ENCODE measurements at regions of chr16 and their contacts with region 1.

Region 1: DNA sequence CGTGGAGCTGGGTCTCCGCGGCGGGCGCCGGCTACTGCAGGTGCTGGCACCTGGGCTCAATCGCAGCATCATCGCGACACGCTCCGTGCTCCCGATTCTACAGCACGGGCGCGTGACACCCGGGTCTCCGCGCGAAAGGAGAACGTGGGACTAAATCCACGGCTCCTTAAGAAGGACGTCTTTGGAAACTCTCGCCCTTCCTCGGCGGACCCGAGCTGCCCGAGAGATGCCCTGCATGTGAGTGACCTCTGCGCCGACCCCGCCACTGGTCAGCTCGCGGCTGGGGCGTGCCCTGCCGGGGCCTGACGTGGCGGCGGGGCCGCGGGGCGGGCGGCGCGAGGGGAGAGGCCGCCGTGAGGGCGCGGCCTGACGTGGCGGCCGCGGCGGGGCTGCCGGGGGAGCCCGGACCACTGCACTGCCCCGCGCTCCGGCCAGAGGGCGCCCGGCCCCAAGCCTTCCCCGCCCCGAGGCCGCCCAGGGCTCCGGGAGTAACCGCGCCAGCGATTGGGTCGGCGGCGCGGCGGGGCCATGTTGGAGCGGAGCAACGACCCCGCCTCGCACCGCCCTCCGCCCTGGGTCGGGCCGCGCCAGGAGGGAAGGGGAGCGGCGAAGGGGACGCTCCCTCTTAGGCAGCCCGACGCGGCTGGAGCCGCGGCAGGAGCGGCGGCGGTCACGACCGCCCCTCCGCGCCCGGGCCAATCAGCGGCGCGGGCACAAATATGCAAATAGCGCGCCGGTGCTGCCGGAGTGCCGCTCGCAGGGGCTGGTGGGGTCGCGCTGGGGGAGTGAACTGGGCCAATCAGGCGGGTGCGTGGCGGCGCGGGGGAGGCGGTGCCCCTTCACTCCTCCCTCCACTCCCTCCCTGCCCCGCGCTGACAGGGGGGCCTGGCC is 75.6 kb downstream of the CHD9 start:
- DNase-seq: peak; percentile 97
- ATAC-seq: peak; percentile 94 to 95

Region 2: DNA sequence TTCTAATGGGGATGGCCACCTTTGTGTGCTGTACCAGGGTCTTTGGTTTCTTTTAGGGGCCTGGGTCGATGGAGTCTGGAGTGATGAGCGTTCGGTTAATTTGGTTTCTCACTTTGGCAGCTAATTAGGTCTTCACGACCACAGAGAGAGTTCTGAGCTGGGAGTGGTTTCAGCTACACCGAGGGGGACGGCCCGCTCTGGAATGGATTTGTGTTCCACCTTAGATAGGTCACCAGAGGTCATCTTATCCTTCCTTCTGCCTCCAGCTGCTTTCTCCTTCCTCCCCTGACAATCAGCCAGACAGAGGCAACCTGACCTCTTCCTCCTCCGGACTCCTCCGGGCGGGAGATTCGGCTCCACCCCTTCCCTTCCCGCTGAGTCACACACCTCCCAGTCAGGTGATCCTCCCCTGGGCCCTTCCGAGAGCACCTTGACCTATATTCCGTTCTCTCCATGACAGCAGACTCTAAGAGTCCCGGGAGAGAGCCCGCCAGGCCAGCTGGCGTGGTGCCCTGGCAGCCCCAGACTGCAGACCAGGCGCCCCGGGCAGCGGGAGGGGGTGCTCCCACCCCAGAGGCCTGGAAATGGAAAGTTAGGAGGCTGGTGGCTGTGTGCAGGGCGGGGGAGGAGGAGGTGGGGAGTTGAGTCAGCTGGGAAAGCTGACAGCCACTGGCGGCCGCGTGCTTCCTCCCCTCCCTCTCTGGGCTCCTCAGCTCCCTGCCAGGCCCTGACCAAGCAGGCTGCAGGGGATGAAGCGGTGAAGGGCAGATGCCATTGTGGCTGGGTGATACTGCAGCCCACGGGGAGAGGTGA is 30.9 kb before region 1 on chr16:
- intact Hi-C with region 1: loop called in 1 of 2 experiments (anchors 1 kb)
- DNase-seq: peak; percentile 93
- ATAC-seq: peak; percentile 91 to 92

Region 3: DNA sequence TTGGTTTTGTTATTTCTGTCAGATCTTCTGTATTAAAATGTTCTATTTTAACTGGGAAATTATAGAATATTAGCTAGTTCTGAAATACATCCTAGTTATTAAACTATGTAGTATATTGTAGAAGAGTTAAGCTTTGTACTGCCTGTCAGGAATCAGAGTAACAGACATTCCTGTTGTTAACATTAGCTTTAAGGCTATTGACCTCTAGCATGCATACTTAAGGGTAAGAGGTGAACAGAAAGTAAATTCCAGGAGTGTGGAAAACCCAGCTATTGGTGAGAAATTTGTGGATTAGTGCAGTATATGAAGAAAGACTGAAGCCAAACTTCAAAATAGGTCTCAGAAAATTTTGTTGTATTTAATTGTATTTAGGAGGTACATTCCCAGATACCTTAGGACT is 35.7 kb after region 1 on chr16:
- intact Hi-C with region 1: no loop called
- DNase-seq: no peak
- ATAC-seq: no peak

Region 4: GRCh38 chr16:53207810-53208752 is 77.7 kb after region 1 on chr16:
- intact Hi-C with region 1: loop called in 1 of 2 experiments (anchors 2 kb)
- DNase-seq: peak; percentile 27
- ATAC-seq: peak; percentile 97

Measured in left cardiac atrium (tissue), 4 donors.